Astrocyte of the cerebellum (primary cell): ENCODE measurements at regions of chr5 and their contacts with region 1.

Region 1: GRCh38 chr5:38051711-38052511 is 206.4 kb upstream of the EGFLAM start:
- DNase-seq: no peak
- H3K4me3 ChIP-seq: no peak overlapping the region
- CTCF ChIP-seq: no peak

Region 2: GRCh38 chr5:37757980-37758583 is 293.8 kb before region 1 on chr5:
- in situ Hi-C with region 1: no loop called
- DNase-seq: no peak
- H3K4me3 ChIP-seq: no peak overlapping the region
- CTCF ChIP-seq: peak; percentile 26

Region 3: DNA sequence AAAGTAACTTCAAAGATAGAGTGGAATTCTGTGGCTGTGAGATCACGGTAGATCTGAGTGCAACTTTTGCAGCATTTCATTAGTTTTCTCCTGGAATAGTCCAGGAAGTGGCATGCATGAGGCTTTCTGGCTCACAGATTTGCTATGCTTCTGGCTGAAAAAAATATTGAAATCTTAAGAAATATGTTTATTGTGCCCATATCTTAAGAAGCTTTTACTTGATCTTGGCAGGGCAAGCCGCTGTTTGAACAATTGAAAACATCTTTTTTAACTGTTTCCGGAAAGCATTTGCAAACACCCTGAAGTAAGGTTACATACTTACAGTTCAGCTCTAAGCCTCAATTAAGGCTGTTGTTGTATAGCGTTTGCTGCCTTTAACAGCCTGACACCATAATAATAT is 76.4 kb before region 1 on chr5:
- in situ Hi-C with region 1: loop called (anchors 5 kb)
- DNase-seq: no peak
- H3K4me3 ChIP-seq: no peak overlapping the region
- CTCF ChIP-seq: no peak

Region 4: GRCh38 chr5:38011668-38012188 is 40.2 kb before region 1 on chr5:
- in situ Hi-C with region 1: no loop called
- DNase-seq: no peak
- H3K4me3 ChIP-seq: no peak overlapping the region
- CTCF ChIP-seq: no peak

Region 5: GRCh38 chr5:38124321-38124720 is 72.4 kb after region 1 on chr5:
- in situ Hi-C with region 1: no loop called
- DNase-seq: no peak
- H3K4me3 ChIP-seq: no peak overlapping the region
- CTCF ChIP-seq: no peak

Region 6: GRCh38 chr5:38148021-38148625 is 96.2 kb after region 1 on chr5:
- in situ Hi-C with region 1: no loop called
- DNase-seq: no peak
- H3K4me3 ChIP-seq: no peak overlapping the region
- CTCF ChIP-seq: no peak